Mucosa of descending colon (tissue), 3 donors: ENCODE measurements at regions of chr2 and their contacts with region 1.

Region 1: GRCh38 chr2:17851731-17852585 is 26.5 kb upstream of the KCNS3 start:
- DNase-seq: peak in 2 of 3 donors; percentile 49 to 50
- ATAC-seq: peak; percentile 82
- H3K4me3 ChIP-seq: no peak overlapping the region
- H3K4me1 ChIP-seq: no peaks in the 10 kb centered on the region
- CTCF ChIP-seq: peak; percentile 68

Region 2: GRCh38 chr2:18117592-18117991 is 265.6 kb after region 1 on chr2:
- intact Hi-C with region 1: loop called in 1 of 2 experiments (anchors 5 kb)
- DNase-seq: peak in 2 of 3 donors; percentile 52 to 57
- ATAC-seq: peak; percentile 73
- H3K4me3 ChIP-seq: no peak overlapping the region
- H3K4me1 ChIP-seq: no peaks in the 10 kb centered on the region
- CTCF ChIP-seq: peak; percentile 30

Region 3: DNA sequence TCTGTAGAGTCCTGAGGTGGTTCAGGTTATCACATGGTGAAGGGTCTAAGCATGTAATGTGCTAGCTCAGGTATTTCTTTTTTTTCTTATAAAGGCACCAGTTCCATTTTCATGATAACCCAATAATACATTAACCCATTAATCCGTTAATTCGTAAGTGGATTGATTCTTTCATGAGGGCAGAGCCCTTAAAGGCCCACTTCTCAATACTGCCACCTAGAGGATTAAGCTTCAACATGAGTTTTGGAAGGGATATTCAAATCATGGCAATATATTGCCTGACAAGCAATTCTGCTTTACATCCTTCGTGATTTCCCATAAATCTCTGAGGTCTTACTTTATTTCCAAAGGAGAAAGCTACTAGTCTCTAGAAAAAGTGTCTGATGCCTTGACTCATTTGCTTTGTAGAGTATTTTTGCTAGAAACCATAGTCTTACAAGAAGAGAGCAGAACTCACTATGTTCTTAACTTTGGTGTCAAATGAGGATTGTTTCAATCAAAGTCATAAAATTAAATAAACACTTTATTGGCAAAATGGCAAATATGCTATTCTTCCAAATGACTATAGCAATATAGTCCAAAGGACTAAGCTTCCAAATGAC is 297.8 kb after region 1 on chr2:
- intact Hi-C with region 1: loop called in 1 of 2 experiments (anchors 5 kb)
- DNase-seq: no peak
- ATAC-seq: peak; percentile 38
- H3K4me3 ChIP-seq: no peak overlapping the region
- H3K4me1 ChIP-seq: no peaks in the 10 kb centered on the region
- CTCF ChIP-seq: peak; percentile 55

Region 4: DNA sequence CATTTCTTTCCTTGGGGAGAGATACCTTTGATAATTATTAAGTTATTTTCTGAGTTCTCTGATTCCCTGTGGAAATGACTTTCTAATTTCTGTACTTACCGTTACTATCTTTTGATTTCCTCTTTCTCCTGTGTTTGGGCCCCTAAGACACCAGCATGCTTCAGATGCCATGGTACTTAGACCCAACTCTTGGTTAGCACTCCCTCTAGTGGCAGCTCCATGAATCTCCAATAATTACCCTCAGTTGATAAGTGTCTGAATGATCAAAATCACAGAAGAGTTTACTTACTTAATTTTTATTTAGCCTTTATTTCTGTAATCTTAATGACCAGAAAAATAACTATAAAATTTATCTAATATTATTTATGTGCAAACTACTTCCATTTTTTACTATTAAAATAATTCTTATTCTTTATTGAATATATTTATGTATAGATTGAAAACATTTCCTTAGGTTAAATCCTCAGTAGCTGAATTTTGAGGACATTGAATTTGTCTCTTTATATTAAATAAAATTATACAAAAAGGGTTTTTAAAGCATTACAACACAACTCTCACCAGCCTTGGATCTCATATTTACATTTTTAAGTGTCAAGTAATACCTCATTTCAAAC is 326.9 kb after region 1 on chr2:
- intact Hi-C with region 1: loop called in 1 of 2 experiments (anchors 5 kb)
- DNase-seq: peak in 1 of 3 donors; percentile 61
- ATAC-seq: peak; percentile 57
- H3K4me3 ChIP-seq: no peak overlapping the region
- H3K4me1 ChIP-seq: no peaks in the 10 kb centered on the region
- CTCF ChIP-seq: peak; percentile 79